Activated naive CD8-positive, alpha-beta T cell treated with anti-CD3 and anti-CD28 coated beads, Interleukin-2, amount 10 ng/mL, durations not matched to agents 7 days and 5 days (primary cell): ENCODE measurements at regions of chr7 and their contacts with region 1.

Region 1: GRCh38 chr7:1159891-1160668 is at the start of gene ZFAND2A:
- DNase-seq: peak; percentile 99
- ATAC-seq: peak; percentile 97
- H3K4me3 Mint-ChIP-seq: peak within 1 kb of the TSS; percentile 88
- H3K27ac Mint-ChIP-seq: peak within 1 kb of the TSS; percentile 87
- H3K4me1 Mint-ChIP-seq: peaks cover 16% of the 10 kb centered on the region
- H3K27me3 Mint-ChIP-seq: no peaks in the 10 kb centered on the region
- total RNA-seq, gene ZFAND2A: 31.3 to 33.2 TPM

Region 2: GRCh38 chr7:974820-975681 is 185.0 kb before region 1 on chr7 and contains the start of gene COX19:
- POLR2A ChIA-PET with region 1: interaction called, 12 read pairs
- DNase-seq: peak; percentile 93
- ATAC-seq: peak; percentile 94
- H3K4me3 Mint-ChIP-seq: peak within 1 kb of the TSS; percentile 93
- H3K27ac Mint-ChIP-seq: peak within 1 kb of the TSS; percentile 89
- H3K4me1 Mint-ChIP-seq: peaks cover 16% of the 10 kb centered on the region
- H3K27me3 Mint-ChIP-seq: no peaks in the 10 kb centered on the region
- total RNA-seq, gene COX19: 26.2 to 29.3 TPM

Region 3: DNA sequence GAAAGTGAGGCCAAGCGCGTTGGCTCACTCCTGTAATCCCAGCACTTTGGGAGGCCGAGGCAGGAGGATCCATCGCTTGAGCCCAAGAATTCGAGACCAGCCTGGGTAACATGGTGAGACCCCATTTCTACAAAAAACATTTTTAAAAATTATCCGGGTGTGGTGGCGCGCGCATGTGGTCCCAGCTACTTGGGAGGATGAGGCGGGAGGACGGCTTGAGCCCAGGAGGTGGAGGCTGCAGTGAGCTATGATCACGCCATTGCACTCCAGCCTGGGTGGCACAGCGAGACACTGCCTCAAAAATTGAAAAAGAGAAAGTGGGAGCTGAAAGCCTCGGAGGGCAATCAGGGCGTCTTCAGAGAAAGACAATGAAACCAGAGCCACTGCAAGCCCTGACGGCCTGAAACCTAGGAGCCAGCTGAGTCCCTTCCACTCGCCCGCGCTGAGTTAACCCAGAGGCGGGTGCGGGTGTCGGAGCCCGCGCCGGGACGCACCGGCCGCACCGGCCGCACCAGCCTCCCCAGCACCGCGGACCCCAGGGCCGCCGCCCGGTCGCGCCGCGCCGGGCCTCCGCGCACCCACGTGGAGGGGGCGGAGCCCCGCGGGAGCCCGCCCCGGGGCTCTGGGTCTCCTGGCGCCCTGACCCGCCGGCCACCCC is 22.4 kb before region 1 on chr7:
- POLR2A ChIA-PET with region 1: interaction called, 21 read pairs
- DNase-seq: no peak
- ATAC-seq: peak; percentile 74
- H3K4me3 Mint-ChIP-seq: peak overlapping the region; percentile 91
- H3K27ac Mint-ChIP-seq: peak overlapping the region; percentile 90
- H3K4me1 Mint-ChIP-seq: peaks cover 12% of the 10 kb centered on the region
- H3K27me3 Mint-ChIP-seq: no peaks in the 10 kb centered on the region

Region 4: DNA sequence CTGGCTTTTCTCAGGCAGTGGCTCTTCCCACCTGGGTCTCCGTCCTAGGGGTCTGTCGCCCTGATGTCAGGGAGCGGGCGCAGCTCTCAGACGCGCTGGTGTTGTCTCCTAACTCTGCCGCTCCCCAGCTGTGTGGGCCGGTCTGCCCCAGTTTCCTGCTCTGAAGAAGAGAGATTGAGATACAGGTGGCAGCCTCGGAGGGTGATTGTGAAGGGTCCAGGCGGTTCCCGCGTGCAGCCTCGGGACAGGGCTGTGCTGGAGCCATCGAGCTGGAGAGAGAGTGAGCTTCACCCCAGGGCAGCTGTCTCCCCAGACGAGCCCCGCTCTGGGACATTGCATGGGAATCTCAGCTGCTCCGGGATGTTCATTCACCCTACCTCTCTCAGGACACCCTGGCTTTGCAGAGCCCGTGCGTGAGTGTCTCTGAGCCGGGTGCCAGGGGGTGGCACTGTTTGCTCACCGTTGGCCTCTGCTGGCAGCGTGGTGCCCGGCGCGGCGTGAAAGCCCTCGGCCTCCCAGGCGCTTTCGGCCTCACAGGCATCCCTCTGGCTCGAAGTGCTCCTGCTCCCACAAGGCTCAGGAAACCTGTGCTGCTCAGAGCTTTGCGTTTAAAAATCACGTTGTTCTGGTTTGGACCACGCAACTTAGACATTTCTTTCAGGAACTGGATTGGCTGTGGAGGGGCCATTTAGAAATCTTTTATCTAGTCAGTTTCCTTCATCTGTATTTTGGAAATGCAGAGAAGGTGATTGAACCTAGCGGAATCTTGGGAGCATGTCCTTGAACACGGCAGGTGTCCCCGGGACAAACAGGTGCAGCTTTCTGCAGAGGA is 33.7 kb after region 1 on chr7:
- POLR2A ChIA-PET with region 1: interaction called, 10 read pairs
- DNase-seq: peak; percentile 64
- ATAC-seq: peak; percentile 78
- H3K4me3 Mint-ChIP-seq: no peak overlapping the region
- H3K27ac Mint-ChIP-seq: no peak overlapping the region
- H3K4me1 Mint-ChIP-seq: peaks cover 15% of the 10 kb centered on the region
- H3K27me3 Mint-ChIP-seq: peaks cover 13% of the 10 kb centered on the region